ENCODE measurements at regions of chr15 and their contacts with region 1.

Region 1: GRCh38 chr15:40367686-40368611 is 9.9 kb downstream of the DISP2 start:
- DNase-seq: peak; percentile 55
- H3K4me3 ChIP-seq: peak overlapping the region; percentile 44
- H3K27ac ChIP-seq: no peak overlapping the region
- H3K27me3 ChIP-seq: peaks cover 27% of the 10 kb centered on the region
- CTCF ChIP-seq: peak; percentile 79

Region 2: DNA sequence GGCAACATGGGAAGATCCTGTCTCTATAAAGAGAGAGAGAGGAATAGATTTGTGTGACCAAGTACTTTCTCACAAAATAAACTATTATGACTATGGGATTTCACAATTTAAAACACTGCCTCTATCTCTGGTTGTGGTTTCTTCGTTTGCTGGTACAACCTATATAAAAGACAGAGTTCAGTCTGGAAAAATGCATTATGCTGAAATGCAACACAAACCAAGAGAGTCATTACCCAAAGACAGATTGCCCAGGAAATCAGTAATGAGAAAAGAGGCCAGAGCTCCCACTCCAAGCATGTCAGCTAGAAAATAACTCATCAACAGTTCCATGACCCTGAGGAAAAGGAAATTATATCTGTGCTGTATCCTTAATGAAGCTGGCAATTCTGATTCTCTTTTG is 471.1 kb before region 1 on chr15:
- CTCF ChIA-PET with region 1: no interaction called
- POLR2A ChIA-PET with region 1: no interaction called
- DNase-seq: no peak
- H3K4me3 ChIP-seq: no peak overlapping the region
- H3K27ac ChIP-seq: peak overlapping the region; percentile 58
- H3K27me3 ChIP-seq: no peaks in the 10 kb centered on the region
- CTCF ChIP-seq: no peak

Region 3: DNA sequence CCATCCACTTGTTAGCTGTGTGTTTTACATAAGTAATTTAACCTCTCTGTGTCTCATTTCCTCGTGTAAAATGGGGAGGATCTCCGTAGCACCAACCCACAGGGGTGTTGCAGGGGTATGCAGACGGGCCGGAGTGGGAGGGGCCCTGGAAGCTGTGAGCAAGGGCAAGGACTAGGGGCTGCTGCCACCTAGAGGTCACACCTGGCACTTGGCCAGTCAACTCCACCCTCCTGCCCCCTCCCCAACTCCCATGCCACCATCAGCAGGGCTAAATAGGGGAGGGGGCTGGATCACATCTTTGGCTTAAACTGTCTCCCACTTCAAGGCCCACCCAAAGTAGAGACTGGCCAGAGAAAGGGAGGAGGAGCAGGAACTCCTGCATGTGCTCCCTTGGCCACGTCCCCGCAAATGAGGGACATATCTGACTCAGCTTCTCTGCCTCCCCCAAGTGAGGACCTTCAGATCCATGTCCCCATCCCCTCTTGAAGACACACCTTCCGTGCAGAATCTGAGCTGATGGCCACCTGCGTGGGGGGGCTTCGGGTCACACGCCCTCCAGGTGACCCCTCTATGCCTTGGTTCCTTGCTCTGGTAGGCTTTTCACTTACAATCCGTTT is 29.8 kb before region 1 on chr15:
- CTCF ChIA-PET with region 1: interaction called, 16 read pairs
- POLR2A ChIA-PET with region 1: interaction called, 3 read pairs
- DNase-seq: no peak
- H3K4me3 ChIP-seq: peak overlapping the region; percentile 70
- H3K27ac ChIP-seq: peak overlapping the region; percentile 97
- H3K27me3 ChIP-seq: no peaks in the 10 kb centered on the region
- CTCF ChIP-seq: peak; percentile 66

Region 4: GRCh38 chr15:40379853-40380252 is 11.9 kb after region 1 on chr15:
- CTCF ChIA-PET with region 1: interaction called, 11 read pairs
- POLR2A ChIA-PET with region 1: interaction called, 5 read pairs
- DNase-seq: peak; percentile 97
- H3K4me3 ChIP-seq: no peak overlapping the region
- H3K27ac ChIP-seq: peak overlapping the region; percentile 80
- H3K27me3 ChIP-seq: no peaks in the 10 kb centered on the region
- CTCF ChIP-seq: no peak

Measured in AG04450 (cell line).